ENCODE measurements at regions of chr19 and their contacts with region 1.

Region 1: GRCh38 chr19:46661020-46661731 is at the start of gene DACT3:
- H3K4me3 ChIP-seq: peak within 1 kb of the TSS; percentile 45
- H3K27ac ChIP-seq: peak within 1 kb of the TSS; percentile 27; the same call in 1 of the 2 replicates
- H3K4me1 ChIP-seq: peaks cover 21% of the 10 kb centered on the region
- CTCF ChIP-seq: no peak

Region 2: GRCh38 chr19:46495787-46496101 is 165.4 kb before region 1 on chr19 and contains the start of gene PNMA8B:
- CTCF ChIA-PET with region 1: no interaction called
- POLR2A ChIA-PET with region 1: no interaction called
- H3K4me3 ChIP-seq: peak within 1 kb of the TSS; percentile 30
- H3K27ac ChIP-seq: no peak within 1 kb of the TSS
- H3K4me1 ChIP-seq: 0 out of 2 replicates have a peak, but pooled peaks cover 3% of the 10 kb centered on the region
- CTCF ChIP-seq: no peak

Region 3: DNA sequence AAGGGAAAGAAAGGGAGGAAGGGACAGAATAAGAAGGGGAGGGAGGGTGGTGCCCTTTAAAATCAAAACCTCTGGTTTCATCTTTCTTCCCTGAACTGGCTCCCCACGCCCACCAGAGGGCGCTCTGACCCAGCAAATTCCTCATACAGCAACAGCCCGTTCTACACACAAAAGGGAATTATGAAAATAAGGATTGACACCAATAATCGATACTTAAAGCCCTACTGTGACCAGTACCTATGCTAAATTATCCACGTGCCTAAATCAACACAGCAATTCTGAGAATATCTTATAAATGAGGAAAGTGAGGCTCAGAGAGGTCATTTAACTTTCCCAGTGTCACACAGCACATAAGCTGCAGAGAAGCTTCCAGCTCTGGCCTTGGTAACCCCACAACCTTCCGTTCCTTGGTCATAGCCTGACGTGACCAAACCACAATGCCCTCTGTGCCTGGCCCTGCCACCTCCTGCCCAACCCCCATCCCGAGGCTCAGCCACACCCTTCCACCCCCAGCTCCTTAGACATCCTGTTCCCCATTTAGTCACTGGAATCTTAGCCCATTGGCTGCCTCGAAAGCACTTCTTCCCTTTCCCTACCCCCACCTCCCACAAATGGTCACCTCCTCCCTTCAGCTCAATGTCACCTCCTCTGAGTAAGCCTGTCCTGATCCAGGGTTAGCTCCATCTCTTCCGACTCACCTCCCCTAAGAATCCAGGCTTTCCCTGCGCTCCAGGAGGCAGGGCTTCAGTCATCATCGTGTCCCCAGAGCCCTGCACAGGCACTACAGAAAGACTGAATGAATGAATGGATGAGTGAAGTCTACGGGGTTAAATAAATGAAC is 131.3 kb before region 1 on chr19:
- CTCF ChIA-PET with region 1: interaction called, 50 read pairs
- POLR2A ChIA-PET with region 1: no interaction called
- H3K4me3 ChIP-seq: no peak overlapping the region
- H3K27ac ChIP-seq: no peak overlapping the region
- H3K4me1 ChIP-seq: no peaks in the 10 kb centered on the region
- CTCF ChIP-seq: peak; percentile 89

Region 4: DNA sequence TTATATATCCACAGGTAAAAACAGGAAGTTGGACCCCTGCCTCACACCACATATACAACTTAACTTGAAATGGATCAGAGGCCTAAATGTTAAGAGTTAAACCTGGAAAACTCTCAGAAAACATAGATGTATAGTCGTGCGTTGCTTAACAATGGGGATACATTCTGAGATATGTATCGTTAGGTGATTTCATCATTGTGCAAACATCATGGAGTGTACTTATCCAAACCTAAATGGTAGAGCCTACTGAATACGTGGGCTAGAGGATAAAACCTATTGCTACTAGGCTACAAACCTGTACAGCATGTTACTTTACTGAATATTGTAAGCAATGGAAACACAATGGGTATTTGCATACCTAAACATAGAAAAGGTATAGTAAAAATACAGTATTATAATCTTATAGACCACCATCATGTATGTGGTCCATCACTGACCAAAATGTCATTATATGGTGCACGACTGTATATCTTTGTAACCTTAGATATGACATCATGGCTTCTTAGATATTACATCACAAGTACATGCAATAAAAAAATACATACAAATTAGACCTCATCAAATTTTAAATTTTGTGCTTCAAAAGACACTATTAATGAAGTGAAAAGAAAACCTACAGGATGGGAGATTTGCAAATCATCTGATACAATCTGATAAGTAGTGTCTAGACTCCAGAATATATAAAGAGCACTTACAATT is 74.7 kb before region 1 on chr19:
- CTCF ChIA-PET with region 1: no interaction called
- POLR2A ChIA-PET with region 1: no interaction called
- H3K4me3 ChIP-seq: no peak overlapping the region
- H3K27ac ChIP-seq: no peak overlapping the region
- H3K4me1 ChIP-seq: no peaks in the 10 kb centered on the region
- CTCF ChIP-seq: no peak

Region 5: DNA sequence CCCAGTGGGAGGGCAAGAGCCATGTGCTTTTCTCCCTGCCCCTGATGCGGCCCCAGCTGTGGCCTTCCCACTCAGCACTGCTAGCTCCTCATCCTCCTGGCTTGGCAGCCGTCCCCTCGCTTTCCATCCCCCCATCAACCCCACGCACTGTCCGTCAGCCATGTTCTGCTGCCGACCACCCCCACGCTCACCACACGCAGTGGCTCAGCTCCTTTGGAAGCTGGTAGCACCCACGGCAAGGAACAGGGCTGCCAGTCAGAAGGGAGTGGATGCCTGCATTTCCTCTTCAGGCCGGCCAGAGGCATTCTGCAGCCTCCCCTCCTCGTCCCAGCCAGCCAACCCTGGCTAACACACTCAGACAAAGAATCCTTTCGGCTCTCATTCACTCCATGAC is 53.7 kb before region 1 on chr19:
- CTCF ChIA-PET with region 1: interaction called, 327 read pairs
- POLR2A ChIA-PET with region 1: interaction called, 14 read pairs
- H3K4me3 ChIP-seq: no peak overlapping the region
- H3K27ac ChIP-seq: no peak overlapping the region
- H3K4me1 ChIP-seq: peaks cover 8% of the 10 kb centered on the region
- CTCF ChIP-seq: no peak

Region 6: DNA sequence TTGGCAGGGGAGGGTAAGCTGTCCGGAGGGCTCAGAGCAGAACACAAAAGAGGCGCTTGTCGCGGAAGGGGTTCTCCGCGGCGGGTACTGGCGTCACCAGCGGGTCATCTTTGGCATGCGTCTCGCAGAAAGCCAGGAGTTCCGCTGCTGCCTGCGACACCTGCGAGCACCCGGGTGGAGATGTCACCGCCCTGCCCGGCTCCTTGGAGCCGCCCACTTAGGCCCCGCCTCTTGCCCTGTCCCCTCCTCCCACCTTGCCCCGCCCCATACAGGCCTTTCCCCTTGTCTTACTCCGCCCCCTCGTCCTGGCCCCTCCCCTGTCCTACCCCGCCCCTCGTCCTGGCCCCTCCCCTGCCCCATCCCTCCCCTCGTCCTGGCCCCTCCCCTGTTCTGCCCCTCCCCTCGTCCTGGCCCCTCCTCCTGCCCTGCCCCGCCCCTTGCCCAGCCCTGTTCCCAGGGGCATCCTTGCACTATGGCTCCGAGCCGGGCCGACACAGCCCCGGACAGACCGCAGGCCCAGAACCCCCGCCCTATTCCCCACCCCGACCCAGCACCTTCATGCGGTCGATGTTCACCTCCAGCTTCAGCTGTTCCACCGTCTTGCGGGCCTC is 27.0 kb before region 1 on chr19:
- CTCF ChIA-PET with region 1: interaction called, 45 read pairs
- POLR2A ChIA-PET with region 1: interaction called, 7 read pairs
- H3K4me3 ChIP-seq: peak overlapping the region; percentile 33
- H3K27ac ChIP-seq: no peak overlapping the region
- H3K4me1 ChIP-seq: peaks cover 3% of the 10 kb centered on the region; the same call in 1 of the 2 replicates
- CTCF ChIP-seq: no peak

Region 7: DNA sequence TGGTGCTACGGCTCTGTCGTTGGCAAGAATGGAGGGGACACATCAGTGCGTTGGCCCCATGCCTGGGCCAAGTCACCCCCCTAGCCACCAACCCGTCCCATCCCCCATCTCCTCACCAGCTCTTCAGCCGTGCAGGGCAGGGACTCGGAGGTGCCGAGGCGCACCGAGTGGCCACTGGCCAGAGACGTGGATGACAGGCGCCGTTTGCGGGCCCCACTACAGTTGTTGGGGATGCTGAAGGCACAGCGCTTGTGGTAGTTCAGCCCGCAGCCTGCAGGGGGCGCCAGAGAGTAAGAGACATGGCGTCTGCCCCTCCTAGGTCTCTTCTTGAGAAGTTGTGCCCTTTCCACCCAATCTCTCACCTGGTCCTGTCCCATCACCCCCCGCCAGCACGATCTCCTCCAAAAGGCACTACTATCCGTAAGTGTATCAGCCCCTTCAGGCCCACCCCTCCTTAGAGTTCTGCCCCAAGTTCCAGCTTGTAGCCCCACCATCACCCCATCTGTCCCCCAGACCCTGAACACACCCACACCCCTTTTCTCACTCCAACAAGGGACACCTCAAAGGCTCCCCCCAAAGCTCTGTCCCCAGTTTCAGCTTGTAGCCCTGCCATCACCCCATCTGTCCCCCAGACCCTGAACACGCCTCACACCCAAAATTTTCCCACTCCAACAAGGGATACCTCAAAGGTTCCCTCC is 43.4 kb after region 1 on chr19:
- CTCF ChIA-PET with region 1: interaction called, 15 read pairs
- POLR2A ChIA-PET with region 1: no interaction called
- H3K4me3 ChIP-seq: no peak overlapping the region
- H3K27ac ChIP-seq: no peak overlapping the region
- H3K4me1 ChIP-seq: no peaks in the 10 kb centered on the region
- CTCF ChIP-seq: peak; percentile 91

Region 8: DNA sequence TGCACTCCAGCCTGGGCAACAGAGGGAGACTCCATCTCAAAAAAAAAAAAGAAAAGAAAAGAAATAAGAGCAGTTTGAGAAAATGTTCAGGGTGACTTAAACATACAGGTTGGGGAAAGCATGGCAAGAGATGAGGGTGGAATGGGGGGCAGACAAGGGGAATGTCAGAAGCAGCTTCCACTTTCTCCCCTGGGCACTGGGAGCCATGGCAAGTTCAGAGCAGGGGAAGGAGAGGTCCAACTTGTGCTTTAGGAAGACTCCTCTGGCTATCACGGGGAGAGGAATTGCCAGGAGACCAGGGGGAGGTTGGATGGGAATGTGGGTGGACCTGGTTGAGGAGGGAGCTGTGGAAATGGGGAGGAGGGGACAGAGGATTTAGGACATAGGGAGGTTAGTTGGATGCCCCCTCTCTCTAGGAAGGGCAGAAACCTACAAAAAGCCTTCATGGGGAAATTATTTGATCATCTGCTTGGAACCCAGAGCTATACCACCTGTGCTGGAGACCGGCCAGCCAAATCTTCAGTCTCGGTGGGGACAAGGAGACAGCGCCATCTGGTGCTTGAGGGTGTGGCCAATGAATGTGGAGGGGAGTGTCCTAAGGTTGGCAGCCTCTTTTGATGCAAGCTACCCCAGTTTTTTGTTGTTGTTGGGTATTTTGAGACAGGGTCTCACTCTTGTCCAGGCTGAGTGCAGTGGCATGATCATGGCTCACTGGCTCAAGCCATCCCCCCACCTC is 92.4 kb after region 1 on chr19:
- CTCF ChIA-PET with region 1: interaction called, 11 read pairs
- POLR2A ChIA-PET with region 1: interaction called, 3 read pairs
- H3K4me3 ChIP-seq: no peak overlapping the region
- H3K27ac ChIP-seq: no peak overlapping the region
- H3K4me1 ChIP-seq: no peaks in the 10 kb centered on the region
- CTCF ChIP-seq: peak; percentile 57

Region 9: GRCh38 chr19:46786236-46787039 is 125.3 kb after region 1 on chr19:
- CTCF ChIA-PET with region 1: no interaction called
- POLR2A ChIA-PET with region 1: no interaction called
- H3K4me3 ChIP-seq: peak overlapping the region; percentile 57
- H3K27ac ChIP-seq: peak overlapping the region; percentile 96
- H3K4me1 ChIP-seq: peaks cover 20% of the 10 kb centered on the region
- CTCF ChIP-seq: no peak; the same call in none of the 2 replicates

Measured in HEK293 (cell line).